ENCODE measurements at regions of chr3 and their contacts with region 1.

Region 1: GRCh38 chr3:156816800-156817645 is 9.1 kb upstream of the LEKR1 start:
- DNase-seq: peak; percentile 87
- H3K4me3 ChIP-seq: peak overlapping the region in 2 of 3 experiments; percentile 20 to 28
- H3K27ac ChIP-seq: peak overlapping the region; percentile 97
- H3K4me1 ChIP-seq: peaks cover 57% of the 10 kb centered on the region
- H3K27me3 ChIP-seq: no peaks in the 10 kb centered on the region
- CTCF ChIP-seq: peak in 1 of 2 donors; percentile 28

Region 2: DNA sequence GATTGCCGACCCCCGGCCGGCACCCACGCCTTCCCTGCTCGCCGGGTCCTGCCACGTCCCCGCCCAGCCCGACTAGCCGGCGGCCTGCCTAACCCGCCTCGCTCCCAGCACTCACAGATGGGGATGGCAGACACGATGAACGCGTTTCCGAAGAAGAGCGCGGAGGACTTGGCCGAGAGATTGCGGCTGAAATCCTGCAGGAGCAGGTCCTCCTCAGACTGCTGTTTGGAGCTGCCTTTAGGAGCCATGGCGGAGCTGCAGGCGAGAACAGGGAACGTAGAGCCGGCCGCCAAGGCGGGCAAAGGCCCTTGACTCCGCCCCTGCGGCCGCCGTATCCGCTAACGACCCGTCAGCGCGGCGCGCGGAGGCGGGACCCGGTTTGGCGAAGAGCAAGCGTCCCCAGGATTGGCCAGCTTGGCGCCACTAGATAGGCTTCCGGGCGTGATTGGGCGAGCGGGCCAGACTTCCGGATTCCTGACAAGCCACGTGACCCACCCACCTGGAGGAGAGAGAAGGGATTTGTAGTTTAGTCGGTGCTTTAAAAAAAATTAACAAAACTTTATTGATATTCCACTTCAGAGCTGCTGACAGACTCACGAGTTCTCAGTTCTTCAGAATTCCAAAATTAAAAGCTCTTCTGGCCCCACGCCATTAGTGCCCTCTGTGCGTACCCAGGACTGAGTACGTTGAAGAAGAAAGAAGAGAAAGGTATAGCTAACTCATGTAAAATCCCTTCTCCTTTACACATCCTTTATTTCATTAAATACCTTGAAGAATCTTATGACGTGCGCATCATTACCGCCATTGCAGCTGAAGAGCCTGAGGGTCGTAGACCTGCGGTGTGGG is 262.0 kb before region 1 on chr3 and contains the start of gene SSR3:
- CTCF ChIA-PET with region 1: no interaction called
- dilution Hi-C with region 1: no loop called
- in situ Hi-C with region 1: no loop called
- intact Hi-C with region 1: loop called (anchors 5 kb)
- DNase-seq: peak; percentile 99
- H3K4me3 ChIP-seq: peak within 1 kb of the TSS; percentile 97 to 99 (median 97)
- H3K27ac ChIP-seq: peak within 1 kb of the TSS; percentile 87
- H3K4me1 ChIP-seq: peaks cover 34% of the 10 kb centered on the region
- H3K27me3 ChIP-seq: no peaks in the 10 kb centered on the region
- CTCF ChIP-seq: peak in 1 of 2 donors; percentile 8
- total RNA-seq, gene SSR3: 375 to 388 TPM

Region 3: GRCh38 chr3:156727519-156728205 is 89.4 kb before region 1 on chr3:
- CTCF ChIA-PET with region 1: no interaction called
- dilution Hi-C with region 1: no loop called
- in situ Hi-C with region 1: no loop called
- intact Hi-C with region 1: loop called (anchors 10 kb)
- DNase-seq: no peak
- H3K4me3 ChIP-seq: no peak overlapping the region
- H3K27ac ChIP-seq: peak overlapping the region; percentile 54
- H3K4me1 ChIP-seq: peaks cover 39% of the 10 kb centered on the region
- H3K27me3 ChIP-seq: no peaks in the 10 kb centered on the region
- CTCF ChIP-seq: no peak

Region 4: GRCh38 chr3:156781310-156782230 is 35.5 kb before region 1 on chr3:
- CTCF ChIA-PET with region 1: no interaction called
- dilution Hi-C with region 1: loop called (anchors 5 kb)
- in situ Hi-C with region 1: no loop called
- intact Hi-C with region 1: no loop called
- DNase-seq: peak; percentile 71
- H3K4me3 ChIP-seq: no peak overlapping the region
- H3K27ac ChIP-seq: peak overlapping the region; percentile 93
- H3K4me1 ChIP-seq: peaks cover 46% of the 10 kb centered on the region
- H3K27me3 ChIP-seq: no peaks in the 10 kb centered on the region
- CTCF ChIP-seq: no peak

Region 5: GRCh38 chr3:157122116-157122515 is 305.1 kb after region 1 on chr3:
- CTCF ChIA-PET with region 1: no interaction called
- dilution Hi-C with region 1: loop called (anchors 5 kb)
- in situ Hi-C with region 1: no loop called
- intact Hi-C with region 1: no loop called
- DNase-seq: peak; percentile 96
- H3K4me3 ChIP-seq: no peak overlapping the region
- H3K27ac ChIP-seq: peak overlapping the region; percentile 98
- H3K4me1 ChIP-seq: peaks cover 61% of the 10 kb centered on the region
- H3K27me3 ChIP-seq: no peaks in the 10 kb centered on the region
- CTCF ChIP-seq: no peak